ENCODE measurements at regions of chr17 and their contacts with region 1.

Region 1: DNA sequence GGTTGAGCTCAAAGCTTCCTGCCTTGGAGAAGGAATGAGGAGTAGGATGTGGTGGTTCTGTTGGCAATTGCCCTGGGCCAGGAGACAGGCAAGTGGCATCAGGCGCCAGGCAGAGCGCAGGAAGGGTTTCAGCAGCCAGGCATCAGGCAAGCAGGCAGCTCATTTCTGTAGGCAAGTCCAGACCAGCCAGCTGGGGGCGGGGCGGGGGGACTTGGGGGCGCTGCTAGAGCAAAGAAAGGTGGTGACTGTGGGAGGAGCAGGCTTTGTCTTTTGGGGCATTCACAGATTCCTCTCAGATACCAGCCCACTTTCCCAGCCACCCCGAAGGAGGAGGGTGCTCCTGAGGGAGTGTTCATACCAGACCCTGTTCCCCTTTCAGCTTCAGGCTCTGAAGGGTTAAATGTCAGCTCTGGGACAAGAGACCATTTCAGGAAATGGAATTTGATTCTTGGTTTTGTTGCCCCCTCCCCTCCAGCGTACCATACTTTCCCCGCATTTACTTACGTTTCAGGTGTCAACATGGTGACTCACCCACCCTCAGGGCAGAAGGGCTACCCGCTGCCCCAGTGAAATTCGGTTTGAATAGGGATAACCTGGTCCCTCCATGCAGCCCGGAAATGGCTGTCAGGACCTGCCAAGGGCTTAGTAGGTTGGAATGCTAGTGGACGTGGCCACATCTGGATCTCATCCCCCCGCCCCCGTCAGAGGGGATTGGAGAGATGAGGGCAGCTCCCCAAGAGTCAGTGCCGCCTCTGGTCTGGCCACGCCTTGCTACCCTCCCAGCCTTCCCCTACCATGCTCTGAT is 13.2 kb downstream of the NGFR start:
- DNase-seq: no peak
- H3K4me3 ChIP-seq: no peak overlapping the region
- H3K4me3 Mint-ChIP-seq: no peak overlapping the region
- H3K27ac ChIP-seq: no peak overlapping the region
- H3K27ac Mint-ChIP-seq: peak overlapping the region in 1 of 8 donors; percentile 46
- H3K4me1 ChIP-seq: no peaks in the 10 kb centered on the region
- H3K4me1 Mint-ChIP-seq: no peaks in the 10 kb centered on the region
- H3K27me3 ChIP-seq: peaks cover 14% of the 10 kb centered on the region
- H3K27me3 Mint-ChIP-seq: peaks cover 19 to 57% of the 10 kb centered on the region in 2 donors

Region 2: GRCh38 chr17:49361902-49362722 is 146.2 kb before region 1 on chr17 and contains the start of gene ZNF652:
- CTCF ChIA-PET with region 1: no interaction called
- POLR2A ChIA-PET with region 1: no interaction called
- DNase-seq: peak; percentile 88 to 98 (median 96)
- H3K4me3 ChIP-seq: peak within 1 kb of the TSS; percentile 70
- H3K4me3 Mint-ChIP-seq: peak within 1 kb of the TSS; percentile 92 to 99 (median 95)
- H3K27ac ChIP-seq: peak within 1 kb of the TSS; percentile 56
- H3K27ac Mint-ChIP-seq: peak within 1 kb of the TSS; percentile 94 to 100 (median 98)
- H3K4me1 ChIP-seq: peaks cover 55% of the 10 kb centered on the region
- H3K4me1 Mint-ChIP-seq: peaks cover 61 to 69% (median 65%) of the 10 kb centered on the region in 3 donors
- H3K27me3 ChIP-seq: no peaks in the 10 kb centered on the region
- H3K27me3 Mint-ChIP-seq: peaks cover 0 to 2% of the 10 kb centered on the region in 2 donors
- total RNA-seq, gene ZNF652: 11.5 to 11.9 TPM

Region 3: DNA sequence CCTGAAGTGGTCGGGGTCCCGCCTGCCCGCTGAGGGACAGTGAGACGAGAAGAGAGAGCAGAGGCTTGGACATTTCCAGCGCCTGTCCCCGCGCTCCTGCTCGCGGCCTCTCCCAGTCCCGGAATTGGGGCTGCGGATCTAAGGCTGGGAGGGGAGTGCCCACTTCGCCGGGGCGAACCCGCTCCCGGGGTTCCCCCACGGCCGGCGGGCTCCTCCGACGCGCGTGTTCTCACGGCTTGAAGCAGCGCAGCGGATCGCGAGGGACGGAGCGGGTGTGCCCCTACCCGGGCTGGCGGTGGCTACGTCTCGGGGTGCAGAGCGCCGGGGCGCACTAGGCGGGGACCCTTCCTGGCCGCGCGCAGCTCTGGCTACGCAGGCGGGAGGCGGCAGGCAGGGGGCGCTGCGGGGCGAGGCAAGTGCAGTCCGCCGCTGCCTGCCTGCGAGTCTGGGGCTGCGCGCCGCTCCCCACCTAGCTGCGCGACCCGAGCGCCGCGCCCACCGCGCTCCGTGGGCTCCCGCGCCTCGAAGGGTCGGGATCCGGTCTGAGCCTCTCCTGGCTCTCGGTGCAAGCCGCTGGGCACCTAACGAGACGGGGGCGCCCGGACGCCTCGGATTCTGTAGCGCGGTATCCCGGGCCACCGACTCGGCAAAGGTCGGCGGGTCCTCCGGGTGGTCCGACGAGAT is 11.9 kb before region 1 on chr17:
- CTCF ChIA-PET with region 1: interaction called, 11 read pairs
- POLR2A ChIA-PET with region 1: no interaction called
- DNase-seq: peak; percentile 78 to 86 (median 81)
- H3K4me3 ChIP-seq: peak overlapping the region; percentile 55
- H3K4me3 Mint-ChIP-seq: peak overlapping the region; percentile 74 to 92 (median 80)
- H3K27ac ChIP-seq: no peak overlapping the region
- H3K27ac Mint-ChIP-seq: no peak overlapping the region
- H3K4me1 ChIP-seq: peaks cover 29% of the 10 kb centered on the region
- H3K4me1 Mint-ChIP-seq: peaks cover 19 to 37% (median 24%) of the 10 kb centered on the region in 3 donors
- H3K27me3 ChIP-seq: peaks cover 43% of the 10 kb centered on the region
- H3K27me3 Mint-ChIP-seq: peaks cover 34 to 37% of the 10 kb centered on the region in 2 donors

Measured in CD8-positive, alpha-beta memory T cell (primary cell).